Tibial artery (tissue), 4 donors: ENCODE measurements at regions of chr6 and their contacts with region 1.

Region 1: GRCh38 chr6:19851241-19852089 is 14.3 kb downstream of the ID4 start:
- DNase-seq: no peak
- H3K4me3 ChIP-seq: peak overlapping the region in 1 of 2 donors; percentile 4
- H3K27ac ChIP-seq: peak overlapping the region; percentile 79 to 84
- H3K4me1 ChIP-seq: peaks cover 0 to 28% (median 13%) of the 10 kb centered on the region in 4 donors
- H3K27me3 ChIP-seq: no peaks in the 10 kb centered on the region
- CTCF ChIP-seq: peak; percentile 88 to 89

Region 2: GRCh38 chr6:18748314-18748713 is 1103.2 kb before region 1 on chr6:
- intact Hi-C with region 1: loop called (anchors 5 kb)
- DNase-seq: no peak
- H3K4me3 ChIP-seq: no peak overlapping the region
- H3K27ac ChIP-seq: no peak overlapping the region
- H3K4me1 ChIP-seq: peaks cover 0 to 9% (median 4%) of the 10 kb centered on the region in 4 donors
- H3K27me3 ChIP-seq: no peaks in the 10 kb centered on the region
- CTCF ChIP-seq: no peak

Region 3: DNA sequence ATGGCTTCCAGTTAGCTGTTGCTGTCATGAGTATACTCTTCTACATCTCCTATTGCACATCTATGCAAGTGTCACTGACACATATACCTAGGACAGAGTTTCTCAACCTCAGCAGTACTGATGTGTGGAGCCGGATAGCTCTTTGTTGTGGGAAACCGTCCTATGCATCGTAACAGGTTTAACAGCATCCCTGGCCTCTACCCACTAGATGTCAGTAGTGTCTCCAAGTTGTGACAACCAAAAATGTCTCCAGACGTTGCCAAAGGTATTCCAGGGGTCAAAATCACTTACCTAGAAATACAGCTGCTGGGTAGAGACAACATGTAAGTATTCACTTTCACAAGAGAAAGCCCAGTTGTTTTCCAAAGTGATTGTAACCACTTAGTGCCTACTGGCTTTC is 826.7 kb before region 1 on chr6:
- intact Hi-C with region 1: loop called (anchors 10 kb)
- DNase-seq: no peak
- H3K4me3 ChIP-seq: no peak overlapping the region
- H3K27ac ChIP-seq: no peak overlapping the region
- H3K4me1 ChIP-seq: peaks cover 0 to 14% (median 5%) of the 10 kb centered on the region in 4 donors
- H3K27me3 ChIP-seq: no peaks in the 10 kb centered on the region
- CTCF ChIP-seq: peak; percentile 53 to 58

Region 4: GRCh38 chr6:19669206-19669605 is 182.3 kb before region 1 on chr6:
- intact Hi-C with region 1: no loop called
- DNase-seq: no peak
- H3K4me3 ChIP-seq: no peak overlapping the region
- H3K27ac ChIP-seq: peak overlapping the region; percentile 51 to 71
- H3K4me1 ChIP-seq: peaks cover 0 to 63% (median 14%) of the 10 kb centered on the region in 4 donors
- H3K27me3 ChIP-seq: no peaks in the 10 kb centered on the region
- CTCF ChIP-seq: no peak

Region 5: GRCh38 chr6:19906171-19906570 is 54.7 kb after region 1 on chr6:
- intact Hi-C with region 1: no loop called
- DNase-seq: no peak
- H3K4me3 ChIP-seq: no peak overlapping the region
- H3K27ac ChIP-seq: no peak overlapping the region
- H3K4me1 ChIP-seq: no peaks in the 10 kb centered on the region
- H3K27me3 ChIP-seq: no peaks in the 10 kb centered on the region
- CTCF ChIP-seq: no peak